ENCODE measurements at regions of chr5 and their contacts with region 1.

Region 1: DNA sequence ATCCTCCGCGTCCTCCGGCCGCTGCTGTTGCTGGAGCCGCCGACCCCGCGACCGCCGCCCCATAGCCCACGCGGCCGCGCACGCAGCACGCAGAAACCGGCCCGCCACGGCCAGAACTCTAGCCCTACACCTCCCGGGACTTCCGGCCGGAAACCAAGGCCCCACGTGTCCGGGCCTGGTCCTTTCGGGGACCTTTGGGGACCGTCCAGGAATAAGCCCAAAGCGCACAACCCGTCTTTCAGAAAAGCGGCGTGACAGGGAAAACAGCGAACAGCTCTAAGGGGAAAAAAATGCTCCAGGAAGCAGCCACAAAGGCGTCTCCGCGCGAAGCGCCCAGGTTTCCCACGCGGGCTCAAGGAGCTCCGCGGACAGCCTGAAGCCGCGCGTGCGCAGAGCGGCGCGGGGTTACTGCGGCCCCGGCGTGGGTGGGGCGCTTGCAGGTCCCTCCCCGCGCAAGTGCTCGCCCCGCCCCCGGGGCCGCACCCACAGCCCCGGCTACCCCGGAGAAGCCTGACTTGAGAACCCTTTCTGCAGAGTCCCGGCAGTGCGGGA is at the starts of genes NSUN2 and SRD5A1:
- DNase-seq: peak; percentile 99
- ATAC-seq: peak; percentile 82
- H3K4me3 ChIP-seq: peak within 1 kb of the TSS; percentile 77
- H3K27ac ChIP-seq: peak within 1 kb of the TSS; percentile 79
- H3K4me1 ChIP-seq: peaks cover 25% of the 10 kb centered on the region
- H3K27me3 ChIP-seq: no peaks in the 10 kb centered on the region
- CTCF ChIP-seq: no peak
- total RNA-seq, gene NSUN2: 351 and 433 TPM in 2 replicates
- total RNA-seq, gene SRD5A1: 18.7 and 39.6 TPM in 2 replicates

Region 2: GRCh38 chr5:5492087-5492933 is 1140.7 kb before region 1 on chr5:
- CTCF ChIA-PET with region 1: no interaction called
- POLR2A ChIA-PET with region 1: no interaction called
- intact Hi-C with region 1: loop called (anchors 1 kb)
- DNase-seq: peak; percentile 72
- ATAC-seq: peak; percentile 53
- H3K4me3 ChIP-seq: no peak overlapping the region
- H3K27ac ChIP-seq: no peak overlapping the region
- H3K4me1 ChIP-seq: no peaks in the 10 kb centered on the region
- H3K27me3 ChIP-seq: no peaks in the 10 kb centered on the region
- CTCF ChIP-seq: peak; percentile 92

Region 3: DNA sequence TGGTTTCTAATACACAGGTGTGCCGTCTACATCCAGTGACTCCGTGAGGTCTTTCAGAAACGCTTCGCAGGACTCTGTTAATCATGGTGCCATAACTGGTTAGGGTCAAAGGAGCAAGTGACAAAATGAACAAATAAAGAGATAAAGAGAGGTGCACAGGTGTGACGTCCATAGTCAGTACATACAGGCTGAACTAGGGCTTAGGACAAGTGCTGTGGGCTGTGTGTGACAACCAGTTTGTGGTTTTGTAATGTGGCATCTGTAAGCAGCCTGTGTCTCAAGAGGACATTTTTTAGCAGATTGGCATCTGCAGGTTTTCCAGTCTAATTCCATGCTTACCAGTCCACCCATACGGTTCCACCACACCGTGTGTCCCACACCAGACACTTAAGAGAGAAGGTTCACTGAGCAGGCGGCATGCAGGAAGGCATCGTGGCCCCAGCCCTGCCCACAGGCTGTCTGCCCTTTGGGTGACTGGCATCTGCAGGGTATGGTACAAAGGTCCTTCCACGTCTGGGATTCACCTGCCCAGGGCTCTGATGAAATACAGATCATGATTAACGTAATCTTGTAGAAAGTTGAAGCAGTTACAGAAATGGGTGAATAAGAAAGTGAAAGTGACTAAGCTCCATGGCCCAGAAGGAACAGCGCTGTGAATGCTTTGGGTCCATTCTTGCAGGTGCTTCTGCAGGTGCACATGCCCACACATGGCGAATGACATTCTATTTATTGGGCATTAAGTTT is 27.1 kb after region 1 on chr5:
- CTCF ChIA-PET with region 1: no interaction called
- POLR2A ChIA-PET with region 1: no interaction called
- intact Hi-C with region 1: no loop called
- DNase-seq: no peak
- ATAC-seq: no peak
- H3K4me3 ChIP-seq: no peak overlapping the region
- H3K27ac ChIP-seq: no peak overlapping the region
- H3K4me1 ChIP-seq: no peaks in the 10 kb centered on the region
- H3K27me3 ChIP-seq: no peaks in the 10 kb centered on the region
- CTCF ChIP-seq: no peak

Region 4: GRCh38 chr5:6704361-6704851 is 71.4 kb after region 1 on chr5:
- CTCF ChIA-PET with region 1: no interaction called
- POLR2A ChIA-PET with region 1: no interaction called
- intact Hi-C with region 1: loop called (anchors 2 kb)
- DNase-seq: peak; percentile 95
- ATAC-seq: peak; percentile 93
- H3K4me3 ChIP-seq: peak overlapping the region; percentile 11; the same call in 1 of the 2 replicates
- H3K27ac ChIP-seq: peak overlapping the region; percentile 77
- H3K4me1 ChIP-seq: peaks cover 43% of the 10 kb centered on the region
- H3K27me3 ChIP-seq: no peaks in the 10 kb centered on the region
- CTCF ChIP-seq: no peak

Region 5: GRCh38 chr5:6712577-6713275 is 79.7 kb after region 1 on chr5:
- CTCF ChIA-PET with region 1: interaction called, 5 read pairs
- POLR2A ChIA-PET with region 1: no interaction called
- intact Hi-C with region 1: loop called (anchors 1 kb)
- DNase-seq: peak; percentile 100
- ATAC-seq: peak; percentile 63
- H3K4me3 ChIP-seq: peak overlapping the region; percentile 73
- H3K27ac ChIP-seq: peak overlapping the region; percentile 86
- H3K4me1 ChIP-seq: peaks cover 33% of the 10 kb centered on the region
- H3K27me3 ChIP-seq: no peaks in the 10 kb centered on the region
- CTCF ChIP-seq: no peak

Region 6: DNA sequence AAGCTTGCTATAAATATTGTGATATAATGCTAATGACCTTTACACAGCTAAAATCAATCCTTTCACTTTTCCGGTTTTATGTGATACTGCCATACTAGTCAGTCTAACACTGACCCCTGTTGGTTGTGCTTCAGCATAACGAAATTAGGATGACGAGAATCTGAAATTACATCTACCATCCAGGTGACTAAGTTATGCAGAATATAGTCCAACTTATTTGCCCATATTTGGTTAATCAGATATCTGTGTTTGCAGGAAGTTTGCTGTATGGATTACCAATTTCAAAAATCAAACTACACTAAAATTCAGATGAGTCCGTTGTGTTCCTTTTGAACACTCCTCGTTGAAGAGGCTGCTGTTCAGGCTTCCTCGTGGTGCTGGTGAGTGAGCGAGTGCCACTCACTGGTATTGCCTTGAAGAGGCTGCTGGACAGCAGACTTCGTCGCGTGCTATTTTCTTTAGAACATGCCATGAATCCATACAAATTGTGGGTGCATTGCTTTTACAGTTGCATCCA is 112.8 kb after region 1 on chr5:
- CTCF ChIA-PET with region 1: interaction called, 4 read pairs
- POLR2A ChIA-PET with region 1: no interaction called
- intact Hi-C with region 1: loop called (anchors 1 kb)
- DNase-seq: peak; percentile 87
- ATAC-seq: peak; percentile 83
- H3K4me3 ChIP-seq: no peak overlapping the region
- H3K27ac ChIP-seq: no peak overlapping the region
- H3K4me1 ChIP-seq: peaks cover 5% of the 10 kb centered on the region
- H3K27me3 ChIP-seq: no peaks in the 10 kb centered on the region
- CTCF ChIP-seq: peak; percentile 97

Measured in PC-3 (cell line).